IMR-90 (cell line): ENCODE measurements at regions of chr10 and their contacts with region 1.

Region 1: GRCh38 chr10:29857843-29858701 is 201.3 kb downstream of the JCAD start:
- DNase-seq: peak; percentile 82
- ATAC-seq: peak; percentile 91
- H3K4me3 ChIP-seq: no peak overlapping the region
- H3K27ac ChIP-seq: peak overlapping the region; percentile 23; the same call in 1 of the 2 replicates
- H3K4me1 ChIP-seq: peaks cover 9% of the 10 kb centered on the region
- H3K27me3 ChIP-seq: no peaks in the 10 kb centered on the region
- CTCF ChIP-seq: peak; percentile 81
- POLR2A ChIP-seq: 0 out of 2 replicates have a peak, but pooled peaks have one; percentile 24
- RAD21 ChIP-seq: peak; percentile 81

Region 2: GRCh38 chr10:29555746-29556481 is 302.2 kb before region 1 on chr10:
- CTCF ChIA-PET with region 1: no interaction called
- POLR2A ChIA-PET with region 1: no interaction called
- dilution Hi-C with region 1: no loop called
- in situ Hi-C with region 1: no loop called
- intact Hi-C with region 1: no loop called
- DNase-seq: peak; percentile 85
- ATAC-seq: peak; percentile 97
- H3K4me3 ChIP-seq: no peak overlapping the region
- H3K27ac ChIP-seq: peak overlapping the region; percentile 45
- H3K4me1 ChIP-seq: peaks cover 13% of the 10 kb centered on the region
- H3K27me3 ChIP-seq: no peaks in the 10 kb centered on the region
- CTCF ChIP-seq: no peak
- POLR2A ChIP-seq: no peak
- RAD21 ChIP-seq: no peak

Region 3: DNA sequence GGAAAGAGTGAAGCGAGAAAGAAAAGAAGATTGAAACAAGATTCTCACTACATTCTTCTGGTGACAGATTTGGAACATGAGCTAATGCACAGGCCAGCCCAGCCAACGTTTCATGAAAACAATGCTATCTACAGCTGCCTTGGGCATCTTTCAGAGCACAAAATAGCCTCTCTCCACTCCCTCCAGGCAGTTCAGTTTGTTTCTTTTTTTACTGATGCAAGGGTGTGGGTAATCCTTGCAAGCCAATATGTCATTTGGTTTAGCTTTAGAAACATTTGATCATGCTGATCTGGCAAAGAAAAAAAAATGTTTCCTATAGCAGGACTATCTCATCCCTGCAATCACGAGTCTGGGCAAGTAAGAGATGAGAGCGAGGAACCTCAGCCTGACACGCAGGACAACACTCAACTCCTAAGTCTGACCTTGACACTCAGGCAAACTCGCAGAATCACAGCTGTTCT is 259.2 kb before region 1 on chr10:
- CTCF ChIA-PET with region 1: no interaction called
- POLR2A ChIA-PET with region 1: no interaction called
- dilution Hi-C with region 1: no loop called
- in situ Hi-C with region 1: no loop called
- intact Hi-C with region 1: loop called (anchors 5 kb)
- DNase-seq: peak; percentile 71
- ATAC-seq: peak; percentile 84
- H3K4me3 ChIP-seq: no peak overlapping the region
- H3K27ac ChIP-seq: peak overlapping the region; percentile 58; the same call in 1 of the 2 replicates
- H3K4me1 ChIP-seq: peaks cover 12% of the 10 kb centered on the region
- H3K27me3 ChIP-seq: no peaks in the 10 kb centered on the region
- CTCF ChIP-seq: no peak
- POLR2A ChIP-seq: no peak
- RAD21 ChIP-seq: no peak

Region 4: DNA sequence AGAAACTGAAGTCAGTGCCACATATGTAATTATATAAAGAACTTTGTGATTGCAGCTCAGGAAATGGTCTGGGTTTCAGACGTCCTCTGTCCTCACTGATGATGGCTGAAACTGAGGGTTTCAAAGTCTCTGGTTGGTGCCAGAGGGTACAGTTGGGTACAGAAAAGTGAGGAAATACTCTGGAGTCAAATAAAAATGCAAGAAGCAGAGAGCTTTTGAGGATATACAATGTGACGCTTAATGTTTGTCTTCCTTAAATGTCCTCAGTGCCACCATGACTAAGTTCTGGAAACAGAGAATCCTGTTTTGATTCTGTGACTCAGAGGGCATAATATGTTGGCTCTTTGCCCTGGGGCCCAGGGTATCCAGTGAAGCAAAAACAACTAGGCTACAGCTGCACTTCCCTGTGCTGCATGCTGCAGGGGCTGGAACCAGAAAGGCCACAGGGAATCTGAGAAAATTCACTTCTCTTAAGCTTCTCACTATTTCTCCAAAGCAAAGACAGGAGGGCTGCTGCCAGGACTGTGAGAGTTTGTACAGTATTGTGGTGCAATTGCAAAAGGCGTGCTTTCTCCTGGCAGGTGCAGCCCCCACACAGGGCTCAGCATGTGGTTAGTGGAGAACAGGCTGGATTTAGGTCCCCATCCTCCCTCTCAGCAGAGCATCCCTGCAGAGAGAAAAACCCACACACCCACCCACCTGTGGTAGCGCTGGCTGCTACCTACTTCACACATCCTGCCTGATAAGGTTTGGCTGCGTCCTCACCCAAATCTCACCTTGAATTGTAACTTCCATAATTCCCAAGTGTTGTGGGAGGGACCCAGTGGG is 53.8 kb before region 1 on chr10:
- CTCF ChIA-PET with region 1: no interaction called
- POLR2A ChIA-PET with region 1: no interaction called
- dilution Hi-C with region 1: no loop called
- in situ Hi-C with region 1: no loop called
- intact Hi-C with region 1: loop called (anchors 5 kb)
- DNase-seq: peak; percentile 95
- ATAC-seq: peak; percentile 61
- H3K4me3 ChIP-seq: no peak overlapping the region
- H3K27ac ChIP-seq: peak overlapping the region; percentile 87
- H3K4me1 ChIP-seq: peaks cover 31% of the 10 kb centered on the region
- H3K27me3 ChIP-seq: no peaks in the 10 kb centered on the region
- CTCF ChIP-seq: no peak
- POLR2A ChIP-seq: 0 out of 2 replicates have a peak, but pooled peaks have one; percentile 15
- RAD21 ChIP-seq: no peak